T-cell (primary cell): ENCODE measurements at regions of chr20 and their contacts with region 1.

Region 1: GRCh38 chr20:44861531-44862006 is 23.9 kb upstream of the YWHAB start:
- DNase-seq: no peak
- ATAC-seq: no peak
- H3K4me3 ChIP-seq: no peak overlapping the region
- H3K4me3 Mint-ChIP-seq: no peak overlapping the region
- H3K27ac ChIP-seq: no peak overlapping the region
- H3K27ac Mint-ChIP-seq: no peak overlapping the region
- H3K4me1 ChIP-seq: peaks cover 0 to 4% of the 10 kb centered on the region in 2 experiments
- H3K4me1 Mint-ChIP-seq: peaks cover 6 to 20% (median 13%) of the 10 kb centered on the region in 3 donors
- H3K27me3 ChIP-seq: peaks cover under 1 to 9% of the 10 kb centered on the region in 2 experiments
- H3K27me3 Mint-ChIP-seq: peaks cover under 1 to 3% of the 10 kb centered on the region in 2 donors

Region 2: DNA sequence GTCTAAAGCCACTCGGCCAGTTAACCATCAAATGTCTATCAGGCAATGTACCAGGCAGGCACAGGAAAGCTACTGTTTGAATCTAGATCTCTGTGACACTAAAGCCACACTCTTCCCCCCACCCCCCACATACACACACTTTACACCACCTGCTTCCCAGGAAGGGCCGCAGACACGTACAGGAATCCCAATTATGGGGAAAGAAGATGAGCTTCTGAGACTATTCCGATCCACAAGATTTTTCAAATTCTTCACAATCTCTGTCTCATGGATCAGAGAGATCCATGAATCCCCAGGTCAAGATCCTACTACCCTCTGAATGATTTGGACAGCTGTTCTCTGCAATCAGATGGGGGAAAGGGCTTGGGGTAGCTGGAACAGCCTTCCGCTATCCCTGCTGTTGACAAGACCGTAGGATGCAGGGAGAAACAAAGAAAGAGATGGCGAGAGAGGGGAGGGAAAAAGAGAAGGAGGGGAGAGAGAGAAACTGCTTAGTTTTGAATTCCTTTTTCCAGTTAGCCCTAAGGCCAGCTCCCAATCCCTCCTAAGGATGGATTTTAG is 25.8 kb before region 1 on chr20:
- CTCF ChIA-PET with region 1: interaction called in 1 of 2 experiments, 3 read pairs
- POLR2A ChIA-PET with region 1: interaction called in 1 of 2 experiments, 12 read pairs
- DNase-seq: no peak
- ATAC-seq: no peak
- H3K4me3 ChIP-seq: no peak overlapping the region
- H3K4me3 Mint-ChIP-seq: no peak overlapping the region
- H3K27ac ChIP-seq: no peak overlapping the region
- H3K27ac Mint-ChIP-seq: no peak overlapping the region
- H3K4me1 ChIP-seq: no peaks in the 10 kb centered on the region
- H3K4me1 Mint-ChIP-seq: no peaks in the 10 kb centered on the region
- H3K27me3 ChIP-seq: peaks cover 0 to 21% of the 10 kb centered on the region in 2 experiments
- H3K27me3 Mint-ChIP-seq: peaks cover 26 to 38% of the 10 kb centered on the region in 2 donors

Region 3: GRCh38 chr20:44896583-44896982 is 35.0 kb after region 1 on chr20:
- CTCF ChIA-PET with region 1: no interaction called
- POLR2A ChIA-PET with region 1: no interaction called
- DNase-seq: no peak
- ATAC-seq: no peak
- H3K4me3 ChIP-seq: no peak overlapping the region
- H3K4me3 Mint-ChIP-seq: peak overlapping the region in 2 of 3 donors; percentile 35 to 37
- H3K27ac ChIP-seq: peak overlapping the region; percentile 37
- H3K27ac Mint-ChIP-seq: peak overlapping the region; percentile 83 to 86
- H3K4me1 ChIP-seq: peaks cover 40% of the 10 kb centered on the region in 2 experiments
- H3K4me1 Mint-ChIP-seq: peaks cover 86 to 91% (median 90%) of the 10 kb centered on the region in 3 donors
- H3K27me3 ChIP-seq: no peaks in the 10 kb centered on the region
- H3K27me3 Mint-ChIP-seq: no peaks in the 10 kb centered on the region